IMR-90 (cell line): ENCODE measurements at regions of chr5 and their contacts with region 1.

Region 1: DNA sequence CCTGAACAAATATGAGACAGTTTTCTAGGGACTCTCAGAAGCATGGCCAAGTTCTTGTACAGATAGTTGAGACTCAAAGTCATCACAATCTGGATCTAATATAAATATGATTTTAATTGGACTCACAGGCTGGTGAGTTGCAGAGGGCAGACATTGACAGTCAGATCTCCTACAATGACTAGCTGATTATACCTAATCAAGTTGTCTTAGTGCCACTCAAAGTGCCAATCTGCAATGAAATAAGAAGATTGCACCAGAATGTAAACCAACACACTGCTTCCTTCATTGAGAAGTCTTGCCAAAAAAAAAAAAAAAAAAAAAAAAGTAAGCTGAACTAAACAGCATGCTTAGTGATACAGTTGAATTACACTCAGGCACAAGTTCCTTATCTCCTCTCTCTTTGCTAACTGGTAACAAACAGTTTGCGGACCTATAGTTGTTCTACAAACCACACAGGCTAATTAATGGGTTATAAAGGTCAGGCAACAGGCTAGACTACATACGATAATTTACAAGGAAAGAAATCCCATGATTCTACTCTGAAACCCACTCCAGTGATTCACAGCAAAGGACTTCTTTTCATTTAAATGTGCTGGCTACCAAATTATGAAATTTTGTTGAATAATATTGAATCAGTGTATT is 107.3 kb upstream of the NIPBL start:
- DNase-seq: no peak
- ATAC-seq: no peak
- H3K4me3 ChIP-seq: no peak overlapping the region
- H3K27ac ChIP-seq: no peak overlapping the region
- H3K4me1 ChIP-seq: no peaks in the 10 kb centered on the region
- H3K27me3 ChIP-seq: no peaks in the 10 kb centered on the region
- CTCF ChIP-seq: no peak
- POLR2A ChIP-seq: no peak
- RAD21 ChIP-seq: no peak

Region 2: GRCh38 chr5:36630201-36631145 is 138.8 kb before region 1 on chr5:
- CTCF ChIA-PET with region 1: no interaction called
- POLR2A ChIA-PET with region 1: no interaction called
- dilution Hi-C with region 1: no loop called
- in situ Hi-C with region 1: no loop called
- intact Hi-C with region 1: no loop called
- DNase-seq: peak; percentile 47
- ATAC-seq: no peak; the same call in 1 of the 2 replicates
- H3K4me3 ChIP-seq: no peak overlapping the region
- H3K27ac ChIP-seq: no peak overlapping the region
- H3K4me1 ChIP-seq: no peaks in the 10 kb centered on the region
- H3K27me3 ChIP-seq: peaks cover 1% of the 10 kb centered on the region; the same call in 1 of the 2 replicates
- CTCF ChIP-seq: no peak
- POLR2A ChIP-seq: no peak
- RAD21 ChIP-seq: no peak

Region 3: DNA sequence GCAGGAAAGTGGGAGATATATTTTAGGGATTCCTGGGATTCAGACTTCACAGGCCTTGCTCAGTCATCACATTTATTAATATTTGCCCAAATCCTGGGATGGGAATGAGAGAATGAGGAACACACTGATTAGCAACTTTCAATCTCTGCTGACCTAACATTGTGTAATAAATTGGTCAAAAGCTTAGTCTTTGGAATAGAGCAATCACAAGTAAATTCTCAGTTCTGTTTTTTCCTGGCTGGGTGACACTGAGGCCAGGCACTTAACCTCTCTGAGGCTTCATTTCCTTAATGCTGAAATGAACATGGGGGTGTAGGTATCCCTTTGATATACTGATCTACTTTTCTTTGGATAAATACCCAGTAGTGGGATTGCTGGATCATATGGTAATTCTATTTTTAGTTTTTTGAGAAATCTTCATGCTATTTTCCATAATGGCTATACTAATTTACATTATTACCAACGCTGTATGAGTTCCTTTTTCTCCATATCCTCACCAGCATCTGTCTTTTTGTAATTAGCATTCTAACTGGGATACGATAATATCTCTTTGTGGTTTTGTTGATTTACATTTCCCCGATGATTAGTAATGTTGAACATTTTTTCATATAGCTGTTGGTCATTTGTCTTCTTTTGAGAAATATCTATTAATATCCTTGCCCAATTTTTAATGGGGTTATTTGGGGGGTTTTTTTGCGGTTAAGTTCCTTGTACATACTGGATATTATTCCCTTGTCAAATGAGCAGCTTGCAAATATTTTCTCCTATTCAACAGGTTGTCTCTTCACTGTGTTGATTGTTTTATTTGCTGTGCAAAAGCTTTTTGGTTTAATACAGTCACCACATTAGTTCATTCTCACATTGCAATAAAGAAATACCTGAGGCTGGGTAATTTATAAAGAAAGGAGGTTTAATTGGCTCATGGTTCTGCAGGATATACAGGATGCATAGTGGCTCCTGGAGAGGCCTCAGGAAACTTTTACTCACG is 70.5 kb after region 1 on chr5:
- CTCF ChIA-PET with region 1: no interaction called
- POLR2A ChIA-PET with region 1: no interaction called
- dilution Hi-C with region 1: no loop called
- in situ Hi-C with region 1: no loop called
- intact Hi-C with region 1: loop called (anchors 2 kb)
- DNase-seq: no peak
- ATAC-seq: no peak
- H3K4me3 ChIP-seq: no peak overlapping the region
- H3K27ac ChIP-seq: no peak overlapping the region
- H3K4me1 ChIP-seq: no peaks in the 10 kb centered on the region
- H3K27me3 ChIP-seq: peaks cover 14% of the 10 kb centered on the region
- CTCF ChIP-seq: no peak
- POLR2A ChIP-seq: no peak
- RAD21 ChIP-seq: no peak